ENCODE measurements at regions of chr10 and their contacts with region 1.

Region 1: GRCh38 chr10:68697106-68697505 is 23.9 kb upstream of the CCAR1 start:
- DNase-seq: no peak
- H3K4me3 Mint-ChIP-seq: no peak overlapping the region
- H3K27ac Mint-ChIP-seq: no peak overlapping the region
- H3K4me1 Mint-ChIP-seq: no peaks in the 10 kb centered on the region
- H3K27me3 Mint-ChIP-seq: no peaks in the 10 kb centered on the region

Region 2: DNA sequence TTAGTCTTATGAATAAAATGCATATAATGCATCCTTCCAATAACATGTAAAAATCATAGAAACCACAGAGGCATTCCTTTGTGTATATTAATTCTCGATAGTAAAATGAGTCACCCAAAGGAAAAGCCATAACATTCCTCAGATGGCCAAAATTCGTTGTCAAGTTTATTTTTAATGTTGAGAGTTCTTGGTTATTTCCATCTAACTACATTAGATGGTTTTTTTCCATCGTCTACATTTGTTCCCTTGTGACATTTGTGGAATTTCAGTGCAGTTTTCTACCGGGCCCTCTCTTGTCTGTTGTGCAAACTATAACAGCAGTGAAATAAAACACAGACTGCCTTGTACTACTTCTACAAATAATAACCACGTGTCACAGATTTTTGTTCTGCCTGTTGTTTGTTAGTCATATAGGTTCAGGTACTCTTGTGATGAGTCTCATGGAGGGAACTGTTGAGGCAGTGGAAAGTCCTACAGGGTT is 30.8 kb before region 1 on chr10:
- CTCF ChIA-PET with region 1: no interaction called
- intact Hi-C with region 1: loop called (anchors 2 kb)
- DNase-seq: no peak
- H3K4me3 Mint-ChIP-seq: no peak overlapping the region
- H3K27ac Mint-ChIP-seq: no peak overlapping the region
- H3K4me1 Mint-ChIP-seq: no peaks in the 10 kb centered on the region
- H3K27me3 Mint-ChIP-seq: no peaks in the 10 kb centered on the region

Measured in activated naive CD4-positive, alpha-beta T cell treated with anti-CD3 and anti-CD28 coated beads for 36 hours (primary cell).